ENCODE measurements at regions of chr3 and their contacts with region 1.

Region 1: GRCh38 chr3:171339598-171339997 is 120.6 kb downstream of the TNIK start:
- DNase-seq: no peak
- H3K4me3 Mint-ChIP-seq: no peak overlapping the region
- H3K27ac Mint-ChIP-seq: no peak overlapping the region
- H3K4me1 Mint-ChIP-seq: peaks cover 36% of the 10 kb centered on the region
- H3K27me3 Mint-ChIP-seq: no peaks in the 10 kb centered on the region

Region 2: GRCh38 chr3:171225708-171226107 is 113.9 kb before region 1 on chr3:
- CTCF ChIA-PET with region 1: no interaction called
- POLR2A ChIA-PET with region 1: no interaction called
- intact Hi-C with region 1: loop called (anchors 5 kb)
- DNase-seq: no peak
- H3K4me3 Mint-ChIP-seq: no peak overlapping the region
- H3K27ac Mint-ChIP-seq: peak overlapping the region; percentile 56
- H3K4me1 Mint-ChIP-seq: peaks cover 41% of the 10 kb centered on the region
- H3K27me3 Mint-ChIP-seq: no peaks in the 10 kb centered on the region

Measured in activated CD4-positive, alpha-beta memory T cell treated with anti-CD3 and anti-CD28 coated beads for 36 hours (primary cell).